Panc1 (cell line): ENCODE measurements at regions of chrX and their contacts with region 1.

Region 1: GRCh38 chrX:154649503-154650470 is 3.6 kb downstream of the CTAG2 start:
- DNase-seq: no peak
- ATAC-seq: peak; percentile 60
- H3K4me3 ChIP-seq: peak overlapping the region; percentile 1 to 22; a peak in 2 of 4 replicates
- H3K27ac ChIP-seq: peak overlapping the region; percentile 54
- H3K4me1 ChIP-seq: peaks cover 13% of the 10 kb centered on the region
- H3K27me3 ChIP-seq: no peaks in the 10 kb centered on the region
- CTCF ChIP-seq: no peak

Region 2: GRCh38 chrX:154596290-154596929 is 53.4 kb before region 1 on chrX:
- CTCF ChIA-PET with region 1: no interaction called
- POLR2A ChIA-PET with region 1: no interaction called
- in situ Hi-C with region 1: no loop called
- intact Hi-C with region 1: no loop called
- DNase-seq: no peak
- ATAC-seq: peak; percentile 82
- H3K4me3 ChIP-seq: no peak overlapping the region
- H3K27ac ChIP-seq: peak overlapping the region; percentile 74
- H3K4me1 ChIP-seq: peaks cover 12% of the 10 kb centered on the region
- H3K27me3 ChIP-seq: no peaks in the 10 kb centered on the region
- CTCF ChIP-seq: no peak

Region 3: DNA sequence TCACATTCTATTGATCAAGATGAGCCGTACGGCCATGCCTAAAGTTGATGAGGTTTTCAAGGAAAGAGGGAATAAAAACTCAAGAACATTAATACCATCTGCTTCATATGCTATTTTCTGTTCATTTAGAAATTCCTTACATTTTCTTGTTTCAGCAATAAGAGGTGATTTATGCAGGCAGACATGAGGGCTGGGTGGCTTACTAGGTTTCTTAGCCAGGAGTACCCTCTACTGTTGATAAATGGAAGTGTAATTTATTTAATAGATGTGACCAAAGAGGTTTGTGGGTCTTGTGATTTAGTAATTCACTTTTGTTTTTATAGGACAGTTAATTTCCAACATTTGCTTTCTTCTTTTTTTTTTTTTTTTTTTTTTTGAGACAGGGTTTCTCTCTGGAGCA is 191.1 kb after region 1 on chrX:
- CTCF ChIA-PET with region 1: no interaction called
- POLR2A ChIA-PET with region 1: no interaction called
- in situ Hi-C with region 1: loop called (anchors 25 kb)
- intact Hi-C with region 1: no loop called
- DNase-seq: peak; percentile 48
- ATAC-seq: peak; percentile 85
- H3K4me3 ChIP-seq: no peak overlapping the region
- H3K27ac ChIP-seq: no peak overlapping the region
- H3K4me1 ChIP-seq: no peaks in the 10 kb centered on the region
- H3K27me3 ChIP-seq: no peaks in the 10 kb centered on the region
- CTCF ChIP-seq: peak; percentile 56; the same call in 1 of the 2 replicates

Region 4: DNA sequence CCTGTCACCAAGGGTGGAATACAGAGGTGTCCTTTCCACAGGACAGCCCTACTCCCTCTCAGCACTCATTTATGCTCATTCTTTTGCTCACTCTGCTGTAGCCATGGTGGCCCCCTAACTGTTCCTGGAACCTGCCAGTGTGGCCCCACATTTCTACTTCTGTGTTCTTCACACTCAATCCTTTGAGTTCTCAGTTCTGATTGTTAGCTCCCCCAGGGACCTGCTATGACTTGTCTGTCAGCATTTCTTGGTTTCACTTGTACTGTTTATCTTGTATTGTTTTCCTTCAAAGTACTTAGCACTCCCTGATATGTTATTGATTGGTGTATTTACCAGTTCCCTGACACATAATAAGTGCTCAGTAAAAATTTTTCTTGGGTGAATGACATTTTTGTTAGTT is 581.4 kb after region 1 on chrX:
- CTCF ChIA-PET with region 1: no interaction called
- POLR2A ChIA-PET with region 1: no interaction called
- in situ Hi-C with region 1: no loop called
- intact Hi-C with region 1: no loop called
- DNase-seq: no peak
- ATAC-seq: no peak
- H3K4me3 ChIP-seq: no peak overlapping the region
- H3K27ac ChIP-seq: no peak overlapping the region
- H3K4me1 ChIP-seq: no peaks in the 10 kb centered on the region
- H3K27me3 ChIP-seq: no peaks in the 10 kb centered on the region
- CTCF ChIP-seq: no peak